ENCODE measurements at regions of chr16 and their contacts with region 1.

Region 1: GRCh38 chr16:9090960-9091866 is at the start of gene HAPSTR1:
- DNase-seq: peak; percentile 100
- ATAC-seq: peak; percentile 91 to 95 (median 92)
- H3K4me3 ChIP-seq: peak within 1 kb of the TSS; percentile 89
- H3K27ac ChIP-seq: peak within 1 kb of the TSS; percentile 99
- H3K4me1 ChIP-seq: peaks cover 34% of the 10 kb centered on the region
- H3K27me3 ChIP-seq: no peaks in the 10 kb centered on the region
- CTCF ChIP-seq: no peak
- total RNA-seq, gene HAPSTR1: 54.5 to 80.0 (median 73.5) TPM

Region 2: DNA sequence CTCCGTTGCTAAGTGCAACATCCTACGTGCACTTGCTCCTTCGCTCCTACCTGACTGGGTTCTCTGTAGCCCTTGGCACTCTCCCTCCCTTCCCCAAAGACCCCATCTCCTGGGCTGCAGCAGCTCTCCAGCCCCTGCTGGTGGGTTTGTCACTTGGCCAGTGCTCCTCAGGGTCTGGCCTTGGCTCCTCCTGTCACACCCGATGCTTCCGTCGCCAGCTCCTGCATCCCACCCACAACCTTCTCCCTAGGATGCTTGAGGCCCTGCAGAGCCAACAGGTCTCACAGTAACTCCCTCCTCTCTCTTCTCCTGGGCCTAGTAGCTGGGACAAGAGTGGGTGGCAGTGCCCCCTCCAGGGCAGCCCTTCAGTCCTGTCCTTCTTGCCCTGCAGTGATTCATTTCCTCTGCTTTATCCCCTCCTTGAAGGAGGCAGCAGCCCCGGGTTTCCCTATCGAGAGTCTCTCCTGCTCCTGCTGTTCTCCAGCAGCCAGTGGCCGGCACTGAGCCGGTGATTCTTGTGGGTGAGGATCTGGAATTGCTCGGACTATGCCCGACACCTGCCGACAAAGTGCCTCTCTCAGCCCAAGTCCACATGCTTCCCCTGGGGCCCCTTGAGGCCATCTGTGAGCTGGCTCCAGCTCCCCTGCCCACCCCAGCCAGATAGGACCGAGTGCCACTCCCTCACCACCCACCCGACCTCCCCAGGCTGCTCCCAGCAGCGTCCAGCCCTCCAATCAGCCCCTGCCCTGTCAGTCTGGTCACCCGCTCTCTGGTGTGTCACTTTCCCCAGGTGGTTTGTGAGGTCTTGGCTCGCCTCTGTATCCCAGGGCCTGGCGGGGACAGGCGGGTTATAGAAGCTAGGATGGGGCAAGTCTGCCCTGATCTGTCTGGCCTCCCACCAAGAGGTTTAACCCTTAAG is 205.3 kb before region 1 on chr16:
- intact Hi-C with region 1: loop called in 1 of 2 experiments (anchors 10 kb)
- DNase-seq: peak; percentile 51 to 70
- ATAC-seq: peak; percentile 25 to 54 (median 42)
- H3K4me3 ChIP-seq: no peak overlapping the region
- H3K27ac ChIP-seq: peak overlapping the region; percentile 48
- H3K4me1 ChIP-seq: peaks cover 46% of the 10 kb centered on the region
- H3K27me3 ChIP-seq: peaks cover 0 to 16% (median 0%) of the 10 kb centered on the region in 3 donors
- CTCF ChIP-seq: no peak

Region 3: GRCh38 chr16:8963825-8964441 is 127.3 kb before region 1 on chr16 and contains the start of gene USP7:
- intact Hi-C with region 1: loop called in 1 of 2 experiments (anchors 2 kb)
- DNase-seq: peak; percentile 94 to 97
- ATAC-seq: peak; percentile 93 to 95 (median 94)
- H3K4me3 ChIP-seq: peak within 1 kb of the TSS; percentile 81
- H3K27ac ChIP-seq: peak within 1 kb of the TSS; percentile 87
- H3K4me1 ChIP-seq: peaks cover 34% of the 10 kb centered on the region
- H3K27me3 ChIP-seq: no peaks in the 10 kb centered on the region
- CTCF ChIP-seq: no peak
- total RNA-seq, gene USP7: 87.5 to 135 (median 120) TPM

Region 4: DNA sequence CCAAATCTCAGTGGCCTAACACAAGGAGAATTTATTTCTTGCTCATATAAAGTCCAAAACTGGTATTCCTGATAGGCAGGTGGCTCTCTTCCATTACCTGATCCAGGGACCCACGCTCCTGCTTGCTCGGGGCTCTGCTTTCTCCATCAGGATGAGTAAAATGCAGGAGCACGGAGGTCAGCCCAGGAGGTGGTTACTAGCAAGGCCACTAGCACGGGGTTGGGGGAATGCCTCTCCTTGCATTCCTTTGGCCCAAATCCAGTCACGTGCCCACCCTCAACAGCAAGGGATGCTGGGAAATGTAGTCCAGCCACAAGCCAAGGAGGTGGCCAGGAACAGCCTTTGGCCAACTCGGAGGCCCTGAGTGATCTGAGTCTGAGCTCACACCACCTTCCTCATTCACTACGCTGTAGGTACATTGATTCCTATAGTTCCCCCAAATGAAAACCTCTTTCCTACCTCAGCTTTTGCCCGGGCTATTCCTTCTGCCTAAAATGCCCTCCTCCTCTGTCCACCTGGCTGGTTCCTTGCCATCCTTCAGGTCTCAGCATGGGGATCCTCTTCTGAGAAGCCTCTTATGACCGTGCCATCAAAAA is 38.1 kb before region 1 on chr16:
- intact Hi-C with region 1: loop called in 1 of 2 experiments (anchors 5 kb)
- DNase-seq: peak; percentile 51 to 78
- ATAC-seq: peak; percentile 84 to 89 (median 84)
- H3K4me3 ChIP-seq: peak overlapping the region; percentile 49
- H3K27ac ChIP-seq: peak overlapping the region; percentile 70
- H3K4me1 ChIP-seq: peaks cover 18% of the 10 kb centered on the region
- H3K27me3 ChIP-seq: peaks cover 0 to 3% (median 0%) of the 10 kb centered on the region in 3 donors
- CTCF ChIP-seq: no peak

Region 5: GRCh38 chr16:9199311-9199710 is 108.1 kb after region 1 on chr16:
- intact Hi-C with region 1: no loop called
- DNase-seq: peak in 1 of 2 donors; percentile 22
- ATAC-seq: no peak
- H3K4me3 ChIP-seq: no peak overlapping the region
- H3K27ac ChIP-seq: no peak overlapping the region
- H3K4me1 ChIP-seq: no peaks in the 10 kb centered on the region
- H3K27me3 ChIP-seq: no peaks in the 10 kb centered on the region
- CTCF ChIP-seq: no peak